T-cell (primary cell): ENCODE measurements at regions of chr15 and their contacts with region 1.

Region 1: DNA sequence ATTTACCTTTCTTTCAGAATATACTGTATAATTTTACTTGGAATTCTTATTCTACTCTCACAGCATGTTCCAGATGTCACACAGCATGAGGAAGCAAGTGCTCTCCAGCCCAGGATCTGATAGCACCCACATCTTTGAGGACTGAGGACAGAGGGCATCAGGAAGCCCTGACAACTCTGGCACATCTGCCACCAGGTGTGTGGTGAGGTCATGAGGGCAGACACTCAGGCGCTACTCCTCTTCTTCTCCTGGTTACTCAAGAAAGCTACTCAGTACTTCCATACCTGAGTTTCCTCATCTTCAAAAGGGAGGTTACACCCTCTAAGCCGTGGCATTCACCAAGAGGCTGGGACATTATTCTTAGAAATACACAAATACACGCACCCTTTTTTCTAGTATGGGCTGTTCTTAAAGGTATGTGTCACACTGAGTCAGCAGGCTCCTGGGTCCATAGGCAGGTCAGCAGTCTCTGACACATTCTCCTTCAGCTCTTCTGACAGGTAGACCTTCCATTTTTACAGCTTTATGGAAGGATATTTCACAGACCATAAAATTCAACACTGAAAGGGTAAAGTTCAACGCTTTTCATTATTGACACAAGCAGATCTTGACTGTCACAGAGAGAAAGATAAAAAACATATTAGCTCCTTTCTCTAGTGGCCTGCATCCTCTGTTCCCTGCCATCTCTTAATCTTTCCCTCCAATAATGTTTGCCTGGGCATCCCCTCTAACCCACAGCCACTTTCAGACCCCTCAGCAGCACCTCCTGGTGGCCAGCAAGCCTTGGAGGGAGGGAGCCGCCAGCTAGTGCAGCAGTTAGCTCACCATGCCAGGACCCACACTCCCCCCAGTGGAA is 103.2 kb upstream of the TJP1 start:
- DNase-seq: peak in 14 of 35 experiments; percentile 1 to 32 (median 7)
- ATAC-seq: no peak
- H3K4me3 ChIP-seq: no peak overlapping the region
- H3K4me3 Mint-ChIP-seq: no peak overlapping the region
- H3K27ac ChIP-seq: no peak overlapping the region
- H3K27ac Mint-ChIP-seq: no peak overlapping the region
- H3K4me1 ChIP-seq: no peaks in the 10 kb centered on the region
- H3K4me1 Mint-ChIP-seq: no peaks in the 10 kb centered on the region
- H3K27me3 ChIP-seq: peaks cover 0 to 17% of the 10 kb centered on the region in 2 experiments
- H3K27me3 Mint-ChIP-seq: peaks cover 19 to 52% of the 10 kb centered on the region in 2 donors

Region 2: DNA sequence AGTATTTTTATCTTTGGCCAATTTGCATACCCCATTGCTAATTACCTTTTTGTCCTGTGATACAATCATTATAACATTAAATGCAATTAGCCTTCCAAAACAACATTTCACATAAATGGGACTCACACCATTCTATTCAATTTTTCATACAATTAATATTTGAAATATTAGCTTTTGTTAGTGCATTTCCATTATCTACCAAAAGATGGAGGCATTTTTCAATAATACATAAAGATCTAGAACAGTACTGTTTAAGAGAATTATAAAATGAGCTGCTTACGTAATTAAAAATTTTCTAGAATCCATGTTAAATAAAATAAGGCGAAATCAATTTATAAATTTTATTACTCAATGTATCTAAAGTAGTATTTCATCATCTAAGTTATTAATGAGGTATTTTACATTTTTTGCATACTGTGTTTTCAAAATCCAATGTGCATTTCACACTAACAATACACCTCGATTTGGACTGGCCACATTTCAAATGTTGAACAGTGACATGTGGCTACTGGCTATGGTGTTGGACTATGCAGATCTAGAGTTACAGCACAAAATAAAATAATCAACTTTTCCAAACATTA is 177.5 kb before region 1 on chr15:
- CTCF ChIA-PET with region 1: interaction called, 4 to 17 read pairs
- POLR2A ChIA-PET with region 1: no interaction called
- DNase-seq: peak in 1 of 35 experiments; percentile 19
- ATAC-seq: no peak
- H3K4me3 ChIP-seq: no peak overlapping the region
- H3K4me3 Mint-ChIP-seq: no peak overlapping the region
- H3K27ac ChIP-seq: no peak overlapping the region
- H3K27ac Mint-ChIP-seq: no peak overlapping the region
- H3K4me1 ChIP-seq: no peaks in the 10 kb centered on the region
- H3K4me1 Mint-ChIP-seq: no peaks in the 10 kb centered on the region
- H3K27me3 ChIP-seq: peaks cover 0 to 8% of the 10 kb centered on the region in 2 experiments
- H3K27me3 Mint-ChIP-seq: peaks cover 11 to 17% of the 10 kb centered on the region in 2 donors

Region 3: DNA sequence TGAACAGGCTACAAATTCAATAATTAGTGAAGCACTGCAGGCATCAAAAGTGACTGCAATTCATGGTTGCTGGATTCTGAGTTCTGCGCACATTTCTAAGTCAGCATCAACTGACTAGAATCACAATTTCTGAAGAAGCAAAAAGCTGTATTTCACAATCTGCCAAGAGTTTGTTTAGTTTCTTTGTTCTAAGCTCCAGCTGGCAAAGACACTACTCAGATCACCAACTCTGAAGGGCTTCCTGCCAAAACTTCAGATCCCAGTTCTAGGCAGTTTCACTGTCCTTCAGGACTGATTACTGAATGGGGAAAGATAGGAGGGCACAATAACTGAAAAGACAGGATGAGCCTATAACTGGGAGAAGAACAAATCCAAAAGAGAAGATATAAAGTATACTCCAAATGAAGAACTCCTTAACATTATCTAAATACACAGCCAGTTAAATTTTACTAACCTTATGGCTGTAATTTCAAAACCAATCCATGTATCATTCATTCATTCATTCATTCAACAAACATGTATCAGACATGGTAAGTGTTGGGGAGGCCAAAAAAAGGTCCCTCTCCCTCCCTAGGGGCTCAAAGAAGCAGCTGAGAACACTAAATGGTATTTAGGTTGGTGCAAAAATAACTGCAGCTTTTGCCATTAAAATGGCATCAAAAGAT is 120.3 kb before region 1 on chr15:
- CTCF ChIA-PET with region 1: no interaction called
- POLR2A ChIA-PET with region 1: no interaction called
- DNase-seq: no peak
- ATAC-seq: no peak
- H3K4me3 ChIP-seq: no peak overlapping the region
- H3K4me3 Mint-ChIP-seq: no peak overlapping the region
- H3K27ac ChIP-seq: no peak overlapping the region
- H3K27ac Mint-ChIP-seq: no peak overlapping the region
- H3K4me1 ChIP-seq: no peaks in the 10 kb centered on the region
- H3K4me1 Mint-ChIP-seq: peaks cover 0 to 5% (median 0%) of the 10 kb centered on the region in 3 donors
- H3K27me3 ChIP-seq: peaks cover 3 to 4% of the 10 kb centered on the region in 2 experiments
- H3K27me3 Mint-ChIP-seq: peaks cover 43 to 68% of the 10 kb centered on the region in 2 donors